ENCODE measurements at regions of chr11 and their contacts with region 1.

Region 1: DNA sequence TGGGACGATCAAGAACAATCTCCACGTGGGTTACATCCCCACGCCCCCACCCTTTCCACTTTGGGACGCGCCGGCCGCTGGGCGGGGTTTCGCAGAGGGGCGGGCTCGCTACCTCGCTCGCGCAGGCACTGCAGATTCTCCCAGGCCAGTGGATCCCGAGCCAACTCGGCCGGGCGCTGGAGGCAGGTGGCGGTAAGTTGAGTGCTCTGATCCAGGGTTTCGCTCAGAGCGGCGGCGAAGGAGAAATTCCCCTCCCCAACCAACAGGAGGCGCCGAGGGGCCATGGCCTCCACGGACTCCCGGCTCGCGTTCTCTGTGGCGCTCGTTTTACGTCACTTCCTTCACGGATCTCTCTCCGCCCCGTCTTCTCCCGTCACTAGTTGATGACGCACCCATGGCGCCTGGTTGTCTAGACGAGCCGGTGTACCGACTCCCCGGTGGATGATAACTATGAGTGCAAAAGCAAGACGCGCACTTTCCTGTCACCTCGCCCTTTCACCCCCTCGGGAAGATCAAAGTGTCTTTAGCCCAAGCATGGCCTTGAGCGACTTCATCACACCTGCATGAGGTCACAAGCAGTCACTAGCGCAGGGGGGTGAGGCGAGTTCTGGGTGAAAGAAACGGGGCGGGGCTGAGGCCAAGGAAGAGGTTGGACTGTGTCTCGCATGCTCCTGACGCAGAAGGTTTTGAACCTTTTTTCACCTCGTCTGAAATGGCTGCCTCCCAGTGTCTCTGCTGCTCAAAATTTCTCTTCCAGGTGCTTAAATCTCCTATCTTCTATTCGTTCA is at the starts of genes CFAP68 and FDXACB1:
- DNase-seq: peak; percentile 97 to 99 (median 98)
- H3K4me3 ChIP-seq: peak within 1 kb of the TSS; percentile 79 to 80
- H3K4me3 Mint-ChIP-seq: peak within 1 kb of the TSS; percentile 91 to 98 (median 95)
- H3K27ac ChIP-seq: peak within 1 kb of the TSS; percentile 95
- H3K27ac Mint-ChIP-seq: peak within 1 kb of the TSS; percentile 93 to 100 (median 100)
- H3K4me1 ChIP-seq: peaks cover 18% of the 10 kb centered on the region
- H3K4me1 Mint-ChIP-seq: peaks cover 11 to 28% (median 17%) of the 10 kb centered on the region in 4 donors
- H3K27me3 ChIP-seq: no peaks in the 10 kb centered on the region
- H3K27me3 Mint-ChIP-seq: no peaks in the 10 kb centered on the region
- total RNA-seq, gene CFAP68: 14.8 to 18.7 TPM
- total RNA-seq, gene FDXACB1: 3.9 to 4.0 TPM

Region 2: DNA sequence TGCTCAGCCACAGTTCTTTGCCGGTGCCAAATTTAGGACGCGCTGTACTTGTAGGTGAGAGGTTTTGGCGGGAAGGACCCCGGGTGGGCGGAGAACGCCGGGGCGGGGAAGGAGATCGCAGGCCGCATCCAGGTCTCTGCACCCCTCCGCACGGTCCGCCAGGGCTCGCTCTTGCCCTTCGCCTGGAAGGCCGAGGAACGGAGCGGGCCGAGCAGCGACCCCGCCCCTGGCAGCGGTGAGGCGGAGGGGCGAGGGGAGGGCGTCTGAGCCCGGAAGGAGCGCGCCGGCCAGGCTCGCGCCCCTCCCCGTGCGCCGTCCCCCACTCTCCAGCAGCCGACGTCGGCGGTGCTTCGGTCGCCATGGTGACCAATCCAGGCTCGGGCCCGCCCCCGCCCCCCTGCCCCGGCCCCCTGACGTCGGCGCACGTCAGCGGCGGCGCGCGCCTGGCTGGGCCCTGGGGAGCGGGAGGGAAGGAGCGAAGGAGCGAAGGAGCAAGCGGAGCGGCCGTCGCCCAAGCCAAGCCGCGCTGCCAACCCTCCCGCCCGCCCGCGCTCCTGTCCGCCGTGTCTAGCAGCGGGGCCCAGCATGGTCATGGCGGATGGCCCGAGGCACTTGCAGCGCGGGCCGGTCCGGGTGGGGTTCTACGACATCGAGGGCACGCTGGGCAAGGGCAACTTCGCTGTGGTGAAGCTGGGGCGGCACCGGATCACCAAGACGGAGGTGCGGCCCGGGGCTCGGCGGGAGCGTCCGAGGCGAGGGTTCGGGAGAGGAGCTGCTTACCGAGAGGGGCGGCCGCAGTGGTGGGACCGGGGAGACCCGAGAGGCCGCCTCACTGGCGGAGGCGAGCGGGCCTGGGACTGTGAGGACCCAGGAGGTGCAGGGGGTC is 276.8 kb before region 1 on chr11 and contains the start of gene SIK2:
- CTCF ChIA-PET with region 1: no interaction called
- POLR2A ChIA-PET with region 1: no interaction called
- intact Hi-C with region 1: loop called (anchors 2 kb)
- DNase-seq: peak; percentile 87 to 90 (median 88)
- H3K4me3 ChIP-seq: peak within 1 kb of the TSS; percentile 66 to 75
- H3K4me3 Mint-ChIP-seq: peak within 1 kb of the TSS; percentile 90 to 99 (median 96)
- H3K27ac ChIP-seq: peak within 1 kb of the TSS; percentile 85
- H3K27ac Mint-ChIP-seq: peak within 1 kb of the TSS; percentile 91 to 99 (median 98)
- H3K4me1 ChIP-seq: peaks cover 24% of the 10 kb centered on the region
- H3K4me1 Mint-ChIP-seq: peaks cover 13 to 37% (median 19%) of the 10 kb centered on the region in 4 donors
- H3K27me3 ChIP-seq: no peaks in the 10 kb centered on the region
- H3K27me3 Mint-ChIP-seq: no peaks in the 10 kb centered on the region
- total RNA-seq, gene SIK2: 12.8 to 13.8 TPM

Region 3: GRCh38 chr11:111982019-111982464 is 103.0 kb after region 1 on chr11:
- CTCF ChIA-PET with region 1: interaction called, 5 read pairs
- POLR2A ChIA-PET with region 1: no interaction called
- intact Hi-C with region 1: loop called (anchors 1 kb)
- DNase-seq: peak; percentile 35 to 57 (median 38)
- H3K4me3 ChIP-seq: no peak overlapping the region
- H3K4me3 Mint-ChIP-seq: no peak overlapping the region
- H3K27ac ChIP-seq: no peak overlapping the region
- H3K27ac Mint-ChIP-seq: peak overlapping the region in 2 of 7 donors; percentile 19 to 25
- H3K4me1 ChIP-seq: peaks cover 7% of the 10 kb centered on the region
- H3K4me1 Mint-ChIP-seq: peaks cover 4 to 10% (median 8%) of the 10 kb centered on the region in 4 donors
- H3K27me3 ChIP-seq: no peaks in the 10 kb centered on the region
- H3K27me3 Mint-ChIP-seq: peaks cover 8 to 15% of the 10 kb centered on the region in 2 donors

Region 4: GRCh38 chr11:112074026-112074811 is 195.2 kb after region 1 on chr11 and contains the start of gene NKAPD1:
- CTCF ChIA-PET with region 1: interaction called, 3 read pairs
- POLR2A ChIA-PET with region 1: no interaction called
- intact Hi-C with region 1: loop called (anchors 1 kb)
- DNase-seq: peak; percentile 85 to 90 (median 86)
- H3K4me3 ChIP-seq: peak within 1 kb of the TSS; percentile 96 to 97
- H3K4me3 Mint-ChIP-seq: peak within 1 kb of the TSS; percentile 85 to 97 (median 94)
- H3K27ac ChIP-seq: peak within 1 kb of the TSS; percentile 80
- H3K27ac Mint-ChIP-seq: peak within 1 kb of the TSS; percentile 79 to 98 (median 96)
- H3K4me1 ChIP-seq: peaks cover 23% of the 10 kb centered on the region
- H3K4me1 Mint-ChIP-seq: peaks cover 26 to 36% (median 30%) of the 10 kb centered on the region in 4 donors
- H3K27me3 ChIP-seq: no peaks in the 10 kb centered on the region
- H3K27me3 Mint-ChIP-seq: peaks cover 6 to 7% of the 10 kb centered on the region in 2 donors
- total RNA-seq, gene NKAPD1: 20.9 to 21.2 TPM

Region 5: GRCh38 chr11:112156956-112157766 is 278.1 kb after region 1 on chr11:
- CTCF ChIA-PET with region 1: no interaction called
- POLR2A ChIA-PET with region 1: no interaction called
- intact Hi-C with region 1: no loop called
- DNase-seq: no peak
- H3K4me3 ChIP-seq: no peak overlapping the region
- H3K4me3 Mint-ChIP-seq: no peak overlapping the region
- H3K27ac ChIP-seq: no peak overlapping the region
- H3K27ac Mint-ChIP-seq: no peak overlapping the region
- H3K4me1 ChIP-seq: no peaks in the 10 kb centered on the region
- H3K4me1 Mint-ChIP-seq: no peaks in the 10 kb centered on the region
- H3K27me3 ChIP-seq: no peaks in the 10 kb centered on the region
- H3K27me3 Mint-ChIP-seq: peaks cover 0 to 3% of the 10 kb centered on the region in 2 donors

Region 6: DNA sequence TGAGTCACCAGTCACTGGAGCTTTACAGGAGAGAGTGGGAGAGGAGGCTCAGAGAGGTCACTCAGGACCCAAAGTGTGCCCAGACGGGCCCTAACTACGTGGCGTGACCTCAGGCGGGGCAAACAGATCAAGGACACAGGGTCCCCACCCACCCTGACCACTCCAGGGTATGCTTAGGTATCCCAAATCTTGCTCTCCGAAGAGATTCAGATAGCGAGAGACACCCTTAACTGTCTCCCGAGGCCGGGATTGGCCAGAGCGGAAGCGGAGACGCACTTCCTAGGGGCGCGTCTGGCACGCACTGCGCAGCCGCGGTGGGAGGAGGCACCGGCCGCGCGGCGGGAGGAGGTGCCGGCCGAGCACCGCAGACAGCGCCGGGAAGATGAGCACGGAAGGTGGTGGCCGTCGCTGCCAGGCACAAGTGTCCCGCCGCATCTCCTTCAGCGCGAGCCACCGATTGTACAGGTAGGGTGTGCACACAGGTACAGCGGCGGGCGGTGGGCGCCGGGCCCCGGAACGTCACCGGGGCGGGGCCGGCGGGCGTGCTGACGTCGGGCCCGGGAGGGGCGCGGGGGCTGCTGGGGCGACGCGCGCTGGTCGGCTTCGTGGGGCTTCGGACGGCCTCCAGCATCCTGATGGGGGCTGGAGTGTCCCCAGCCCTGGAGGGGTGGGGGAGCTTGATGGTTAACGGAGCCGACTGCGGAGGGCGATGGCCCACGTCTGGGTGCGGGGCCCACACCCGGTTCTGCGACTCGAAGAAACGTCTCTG is 347.2 kb after region 1 on chr11 and contains the start of gene PTS:
- CTCF ChIA-PET with region 1: no interaction called
- POLR2A ChIA-PET with region 1: no interaction called
- intact Hi-C with region 1: loop called (anchors 1 kb)
- DNase-seq: peak; percentile 81 to 91 (median 88)
- H3K4me3 ChIP-seq: peak within 1 kb of the TSS; percentile 98 to 100
- H3K4me3 Mint-ChIP-seq: peak within 1 kb of the TSS; percentile 92 to 96 (median 94)
- H3K27ac ChIP-seq: peak within 1 kb of the TSS; percentile 98
- H3K27ac Mint-ChIP-seq: peak within 1 kb of the TSS; percentile 96 to 99 (median 99)
- H3K4me1 ChIP-seq: peaks cover 15% of the 10 kb centered on the region
- H3K4me1 Mint-ChIP-seq: peaks cover 19 to 32% (median 22%) of the 10 kb centered on the region in 4 donors
- H3K27me3 ChIP-seq: no peaks in the 10 kb centered on the region
- H3K27me3 Mint-ChIP-seq: no peaks in the 10 kb centered on the region
- total RNA-seq, gene PTS: 23.6 to 26.9 TPM

Measured in CD4-positive, alpha-beta memory T cell (primary cell).